ENCODE measurements at regions of chr11 and their contacts with region 1.

Region 1: GRCh38 chr11:37946155-37946766 is 1348.2 kb upstream of the RAG2 start:
- DNase-seq: no peak
- ATAC-seq: no peak
- H3K4me3 ChIP-seq: no peak overlapping the region
- H3K4me3 Mint-ChIP-seq: no peak overlapping the region
- H3K27ac ChIP-seq: no peak overlapping the region
- H3K27ac Mint-ChIP-seq: no peak overlapping the region
- H3K4me1 ChIP-seq: no peaks in the 10 kb centered on the region
- H3K4me1 Mint-ChIP-seq: no peaks in the 10 kb centered on the region
- H3K27me3 ChIP-seq: no peaks in the 10 kb centered on the region
- H3K27me3 Mint-ChIP-seq: no peaks in the 10 kb centered on the region

Region 2: DNA sequence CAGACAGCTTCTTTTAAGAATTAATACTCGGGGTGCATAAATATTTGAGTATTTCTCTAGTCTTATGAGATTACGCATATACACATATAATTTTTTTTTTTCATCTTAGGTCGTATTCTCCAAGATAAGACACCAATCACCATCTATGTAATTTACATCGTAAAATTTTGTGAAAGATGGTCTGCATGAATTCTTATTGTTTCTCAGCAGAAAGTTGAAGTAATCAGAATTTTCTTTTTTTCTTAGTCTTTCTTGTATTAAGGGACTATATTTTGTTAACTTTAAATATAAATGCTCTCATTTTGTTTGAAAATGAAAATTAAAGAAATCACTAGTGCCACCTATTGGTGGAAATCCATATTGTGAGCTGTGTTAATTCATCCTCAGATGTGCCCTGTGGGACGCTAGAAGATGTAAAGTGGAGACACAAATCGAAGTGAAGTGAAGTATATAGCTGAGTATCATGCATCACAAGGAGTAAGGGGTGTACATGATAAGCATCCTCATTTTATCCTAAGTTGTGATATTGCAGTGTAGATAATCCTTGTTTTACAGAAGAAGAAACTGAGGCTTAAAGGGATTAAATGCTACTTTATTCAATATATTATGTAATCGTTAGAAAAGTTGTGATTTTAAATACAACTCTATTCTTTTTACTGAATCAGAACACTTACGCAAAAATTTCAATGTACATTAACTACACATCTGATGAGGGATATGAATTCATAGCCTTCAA is 1428.9 kb after region 1 on chr11:
- CTCF ChIA-PET with region 1: no interaction called
- POLR2A ChIA-PET with region 1: no interaction called
- intact Hi-C with region 1: loop called in 1 of 2 experiments (anchors 2 kb)
- DNase-seq: peak in 5 of 9 donors; percentile 29 to 42 (median 40)
- ATAC-seq: peak; percentile 61
- H3K4me3 ChIP-seq: no peak overlapping the region
- H3K4me3 Mint-ChIP-seq: no peak overlapping the region
- H3K27ac ChIP-seq: no peak overlapping the region
- H3K27ac Mint-ChIP-seq: no peak overlapping the region
- H3K4me1 ChIP-seq: peaks cover 0 to 8% of the 10 kb centered on the region in 2 donors
- H3K4me1 Mint-ChIP-seq: peaks cover 3 to 36% (median 27%) of the 10 kb centered on the region in 7 donors
- H3K27me3 ChIP-seq: no peaks in the 10 kb centered on the region
- H3K27me3 Mint-ChIP-seq: no peaks in the 10 kb centered on the region

Measured in naive thymus-derived CD4-positive, alpha-beta T cell (primary cell).